ENCODE measurements at regions of chr12 and their contacts with region 1.

Region 1: GRCh38 chr12:21169878-21170472 is 39.0 kb downstream of the SLCO1B1 start:
- DNase-seq: peak; percentile 62
- H3K4me3 ChIP-seq: no peak overlapping the region
- H3K27ac ChIP-seq: no peak overlapping the region
- H3K4me1 ChIP-seq: no peaks in the 10 kb centered on the region
- CTCF ChIP-seq: peak; percentile 98

Region 2: GRCh38 chr12:20646239-20646827 is 523.6 kb before region 1 on chr12:
- CTCF ChIA-PET with region 1: no interaction called
- POLR2A ChIA-PET with region 1: no interaction called
- intact Hi-C with region 1: loop called (anchors 1 kb)
- DNase-seq: peak; percentile 34
- H3K4me3 ChIP-seq: no peak overlapping the region
- H3K27ac ChIP-seq: no peak overlapping the region
- H3K4me1 ChIP-seq: no peaks in the 10 kb centered on the region
- CTCF ChIP-seq: peak; percentile 83

Region 3: DNA sequence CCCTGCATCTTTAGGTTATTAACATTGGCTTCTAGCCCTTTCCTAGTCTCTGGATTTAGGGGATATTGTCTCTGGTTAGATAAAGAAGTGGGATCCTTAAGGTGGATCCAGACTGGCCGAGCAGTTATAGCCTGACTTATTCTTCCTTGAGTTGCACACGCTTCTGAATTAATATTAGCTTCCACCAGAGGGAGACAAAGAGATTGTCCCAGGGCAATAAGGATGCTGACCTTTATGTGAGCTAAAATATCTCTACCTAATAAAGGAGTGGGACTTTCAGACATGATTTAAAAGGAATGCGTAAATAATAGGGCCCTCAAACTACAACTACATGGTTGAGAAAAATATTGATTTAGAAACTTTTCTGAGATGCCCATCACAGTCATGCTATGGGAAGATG is 219.7 kb before region 1 on chr12:
- CTCF ChIA-PET with region 1: no interaction called
- POLR2A ChIA-PET with region 1: no interaction called
- intact Hi-C with region 1: loop called (anchors 1 kb)
- DNase-seq: peak; percentile 35
- H3K4me3 ChIP-seq: no peak overlapping the region
- H3K27ac ChIP-seq: no peak overlapping the region
- H3K4me1 ChIP-seq: no peaks in the 10 kb centered on the region
- CTCF ChIP-seq: peak; percentile 81

Region 4: DNA sequence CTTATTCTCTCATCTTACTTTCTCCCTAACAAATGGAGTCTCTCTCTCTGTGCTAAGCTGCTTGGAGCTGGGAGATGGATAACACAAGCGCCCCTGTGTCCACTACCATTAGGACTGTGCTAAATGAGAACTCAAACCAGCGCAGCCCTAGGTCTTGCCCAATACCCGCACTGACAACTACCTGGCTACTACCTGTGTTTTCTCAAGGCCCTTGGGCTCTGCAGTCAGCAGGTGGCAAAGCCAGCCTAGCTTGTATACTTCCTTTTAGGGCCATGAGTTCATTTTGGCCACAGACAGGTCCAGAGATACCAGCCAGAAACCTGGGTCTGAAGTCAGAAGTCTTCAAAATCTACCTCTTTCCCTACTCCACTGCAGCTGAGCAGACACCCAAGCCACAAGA is 52.0 kb before region 1 on chr12:
- CTCF ChIA-PET with region 1: no interaction called
- POLR2A ChIA-PET with region 1: no interaction called
- intact Hi-C with region 1: no loop called
- DNase-seq: no peak
- H3K4me3 ChIP-seq: no peak overlapping the region
- H3K27ac ChIP-seq: no peak overlapping the region
- H3K4me1 ChIP-seq: no peaks in the 10 kb centered on the region
- CTCF ChIP-seq: no peak

Measured in OCI-LY7 (cell line).